Activated CD8-positive, alpha-beta T cell treated with anti-CD3 and anti-CD28 coated beads for 36 hours (primary cell): ENCODE measurements at regions of chr6 and their contacts with region 1.

Region 1: DNA sequence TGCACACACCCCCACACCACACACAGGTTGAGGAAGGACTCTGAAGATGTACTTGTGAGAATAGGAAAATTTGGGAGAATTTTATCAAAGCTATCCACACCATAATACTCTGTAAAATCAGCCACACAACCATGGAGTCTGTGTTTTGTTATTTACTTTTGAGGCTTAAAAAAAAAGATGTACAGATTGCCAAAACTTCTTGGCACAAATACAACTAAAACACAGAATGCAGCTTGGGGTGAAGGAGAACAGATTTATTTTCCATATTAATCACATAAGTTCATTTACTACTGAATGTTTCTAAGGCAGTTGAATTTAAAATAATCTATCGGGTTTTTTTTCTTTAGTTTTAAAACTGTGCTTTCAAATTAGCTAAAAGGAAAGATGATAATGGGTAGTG is 32.8 kb upstream of the KCNQ5 start:
- DNase-seq: no peak
- ATAC-seq: no peak
- H3K4me3 Mint-ChIP-seq: no peak overlapping the region
- H3K27ac Mint-ChIP-seq: no peak overlapping the region
- H3K4me1 Mint-ChIP-seq: peaks cover 5% of the 10 kb centered on the region
- H3K27me3 Mint-ChIP-seq: peaks cover 6% of the 10 kb centered on the region
- CTCF ChIP-seq: no peak

Region 2: GRCh38 chr6:73129653-73130443 is 540.8 kb after region 1 on chr6:
- CTCF ChIA-PET with region 1: interaction called, 12 read pairs
- POLR2A ChIA-PET with region 1: no interaction called
- intact Hi-C with region 1: no loop called
- DNase-seq: peak; percentile 91
- ATAC-seq: peak; percentile 96
- H3K4me3 Mint-ChIP-seq: no peak overlapping the region
- H3K27ac Mint-ChIP-seq: no peak overlapping the region
- H3K4me1 Mint-ChIP-seq: peaks cover 1% of the 10 kb centered on the region
- H3K27me3 Mint-ChIP-seq: no peaks in the 10 kb centered on the region
- CTCF ChIP-seq: peak; percentile 98